ENCODE measurements at regions of chr4 and their contacts with region 1.

Region 1: GRCh38 chr4:40149960-40150385 is 46.9 kb upstream of the RHOH start:
- DNase-seq: peak; percentile 68
- H3K4me3 ChIP-seq: no peak overlapping the region
- H3K27ac ChIP-seq: no peak overlapping the region
- H3K4me1 ChIP-seq: no peaks in the 10 kb centered on the region
- H3K27me3 ChIP-seq: no peaks in the 10 kb centered on the region
- CTCF ChIP-seq: peak; percentile 86 to 96 (median 89)
- EP300 ChIP-seq: no peak
- POLR2A ChIP-seq: no peak

Region 2: DNA sequence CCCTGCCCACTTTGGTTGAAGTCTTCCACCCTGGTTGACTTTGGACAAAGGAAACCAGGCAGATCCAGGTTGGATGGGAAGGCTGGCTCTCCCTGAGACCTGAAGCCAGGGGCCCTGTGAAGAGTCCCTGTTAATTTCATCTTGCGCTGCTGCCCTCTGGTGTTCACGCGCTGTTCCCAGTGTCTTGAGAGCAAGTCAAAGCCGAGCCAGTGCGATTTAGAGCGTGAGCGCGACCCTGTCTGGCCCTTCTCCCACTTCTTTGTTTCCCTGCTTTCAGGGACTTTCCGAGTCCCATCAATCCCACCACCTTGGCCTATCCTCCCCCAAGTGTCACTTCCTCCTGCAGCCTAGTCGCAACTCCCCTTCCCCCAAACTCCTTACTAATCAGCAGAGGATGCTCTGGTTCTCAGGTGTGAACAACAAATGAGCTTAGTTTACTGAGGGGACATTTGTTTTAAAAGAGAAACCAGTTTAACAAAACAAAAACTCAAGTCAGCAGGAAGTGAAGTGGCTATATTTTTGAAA is 159.3 kb after region 1 on chr4:
- in situ Hi-C with region 1: loop called (anchors 5 to 25 kb)
- intact Hi-C with region 1: no loop called
- DNase-seq: peak; percentile 94
- H3K4me3 ChIP-seq: no peak overlapping the region
- H3K27ac ChIP-seq: peak overlapping the region in 3 of 4 donors; percentile 57 to 67 (median 65)
- H3K4me1 ChIP-seq: peaks cover 0 to 21% (median 5%) of the 10 kb centered on the region in 4 donors
- H3K27me3 ChIP-seq: no peaks in the 10 kb centered on the region
- CTCF ChIP-seq: peak; percentile 85 to 89 (median 86)
- EP300 ChIP-seq: no peak
- POLR2A ChIP-seq: no peak

Region 3: GRCh38 chr4:40316782-40317635 is 167.0 kb after region 1 on chr4:
- in situ Hi-C with region 1: loop called (anchors 5 to 25 kb)
- intact Hi-C with region 1: no loop called
- DNase-seq: peak; percentile 65
- H3K4me3 ChIP-seq: peak overlapping the region in 2 of 4 donors; percentile 7 to 42
- H3K27ac ChIP-seq: peak overlapping the region; percentile 65 to 78 (median 71)
- H3K4me1 ChIP-seq: peaks cover 0 to 22% (median 12%) of the 10 kb centered on the region in 4 donors
- H3K27me3 ChIP-seq: no peaks in the 10 kb centered on the region
- CTCF ChIP-seq: peak; percentile 77 to 88 (median 85)
- EP300 ChIP-seq: no peak
- POLR2A ChIP-seq: no peak

Measured in transverse colon (tissue), 4 donors.